H1 (cell line): ENCODE measurements at regions of chr12 and their contacts with region 1.

Region 1: DNA sequence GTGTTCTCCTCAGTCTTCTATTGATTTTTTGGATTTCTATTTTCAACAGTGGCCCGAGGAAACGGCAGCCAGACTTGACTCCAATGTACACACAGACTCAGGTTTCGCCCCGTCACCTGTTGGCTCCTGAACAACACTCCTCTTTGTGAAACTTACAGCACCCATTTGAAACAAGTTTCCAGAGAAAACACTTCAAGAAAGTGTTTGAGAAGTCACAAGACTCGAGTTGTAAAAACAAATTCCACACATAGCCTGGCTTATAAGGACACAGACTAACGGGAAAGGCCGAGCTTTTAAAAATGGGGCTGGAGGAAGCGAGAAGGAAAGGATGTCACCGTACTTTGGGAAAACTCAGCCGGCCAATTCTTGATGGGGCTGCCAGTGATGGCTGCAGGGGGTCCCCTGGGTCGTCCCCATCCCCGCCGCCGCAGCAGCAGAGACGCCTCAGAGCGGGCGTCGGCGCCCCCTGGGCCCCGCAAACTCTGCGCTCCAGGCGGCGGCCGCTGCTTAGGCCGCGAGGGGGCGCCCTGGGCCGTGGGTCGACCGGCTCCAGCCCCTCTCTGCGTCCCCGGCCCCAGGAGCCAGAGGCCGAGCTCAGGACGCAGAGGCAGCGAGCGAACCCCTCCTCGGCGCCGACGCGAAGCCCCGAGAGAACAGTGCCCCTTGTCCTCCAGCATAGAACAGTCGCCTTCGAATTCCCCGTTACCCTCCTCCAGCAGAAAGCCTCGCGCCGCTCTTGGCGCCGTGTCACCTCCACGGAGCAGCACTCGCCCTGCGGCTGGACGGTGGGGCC is 106.9 kb downstream of the PRICKLE1 start:
- DNase-seq: peak; percentile 27 to 92
- H3K4me3 ChIP-seq: peak overlapping the region; percentile 58 to 85 (median 78)
- H3K27ac ChIP-seq: peak overlapping the region; percentile 67; the same call in 1 of the 2 replicates
- H3K4me1 ChIP-seq: peaks cover 11 to 21% (median 19%) of the 10 kb centered on the region in 4 experiments; a peak in 6 of 7 replicates
- H3K27me3 ChIP-seq: no peaks in the 10 kb centered on the region; a peak in 3 of 7 replicates
- CTCF ChIP-seq: peak; percentile 84 to 98 (median 89)
- EP300 ChIP-seq: no peak
- POLR2A ChIP-seq: peak in 1 of 2 experiments; percentile 60; a peak in 1 of 3 replicates
- RAD21 ChIP-seq: peak; percentile 87 to 95

Region 2: GRCh38 chr12:42508913-42509460 is 26.3 kb after region 1 on chr12:
- CTCF ChIA-PET with region 1: interaction called, 5 read pairs
- POLR2A ChIA-PET with region 1: interaction called, 11 read pairs
- DNase-seq: no peak
- H3K4me3 ChIP-seq: no peak overlapping the region
- H3K27ac ChIP-seq: no peak overlapping the region
- H3K4me1 ChIP-seq: peaks cover 0 to 6% (median under 1%) of the 10 kb centered on the region in 4 experiments; a peak in 2 of 7 replicates
- H3K27me3 ChIP-seq: peaks cover 0 to 3% (median 0%) of the 10 kb centered on the region in 4 experiments; a peak in 2 of 7 replicates
- CTCF ChIP-seq: no peak
- EP300 ChIP-seq: no peak
- POLR2A ChIP-seq: no peak
- RAD21 ChIP-seq: no peak

Region 3: GRCh38 chr12:42524716-42525115 is 42.1 kb after region 1 on chr12:
- CTCF ChIA-PET with region 1: interaction called, 4 read pairs
- POLR2A ChIA-PET with region 1: interaction called, 11 read pairs
- DNase-seq: no peak
- H3K4me3 ChIP-seq: no peak overlapping the region
- H3K27ac ChIP-seq: no peak overlapping the region
- H3K4me1 ChIP-seq: no peaks in the 10 kb centered on the region; a peak in 2 of 7 replicates
- H3K27me3 ChIP-seq: no peaks in the 10 kb centered on the region
- CTCF ChIP-seq: no peak
- EP300 ChIP-seq: no peak
- POLR2A ChIP-seq: no peak
- RAD21 ChIP-seq: no peak

Region 4: GRCh38 chr12:42568952-42569915 is 86.6 kb after region 1 on chr12:
- CTCF ChIA-PET with region 1: interaction called, 104 read pairs
- POLR2A ChIA-PET with region 1: interaction called, 39 read pairs
- DNase-seq: no peak
- H3K4me3 ChIP-seq: no peak overlapping the region
- H3K27ac ChIP-seq: no peak overlapping the region
- H3K4me1 ChIP-seq: peaks cover 0 to 4% (median 0%) of the 10 kb centered on the region in 4 experiments; a peak in 1 of 7 replicates
- H3K27me3 ChIP-seq: no peaks in the 10 kb centered on the region
- CTCF ChIP-seq: peak in 2 of 3 experiments; percentile 36 to 63; a peak in 2 of 4 replicates
- EP300 ChIP-seq: no peak
- POLR2A ChIP-seq: no peak
- RAD21 ChIP-seq: peak; percentile 85

Region 5: GRCh38 chr12:42969357-42969756 is 486.7 kb after region 1 on chr12:
- CTCF ChIA-PET with region 1: no interaction called
- POLR2A ChIA-PET with region 1: no interaction called
- DNase-seq: no peak
- H3K4me3 ChIP-seq: no peak overlapping the region
- H3K27ac ChIP-seq: no peak overlapping the region
- H3K4me1 ChIP-seq: no peaks in the 10 kb centered on the region
- H3K27me3 ChIP-seq: no peaks in the 10 kb centered on the region
- CTCF ChIP-seq: no peak
- EP300 ChIP-seq: no peak
- POLR2A ChIP-seq: no peak
- RAD21 ChIP-seq: no peak